AG04449 (cell line): ENCODE measurements at regions of chr9 and their contacts with region 1.

Region 1: GRCh38 chr9:128412120-128412790 is 8.4 kb upstream of the CERCAM start:
- DNase-seq: no peak
- H3K4me3 ChIP-seq: no peak overlapping the region
- CTCF ChIP-seq: peak; percentile 63

Region 2: GRCh38 chr9:128399861-128400260 is 12.4 kb before region 1 on chr9:
- CTCF ChIA-PET with region 1: interaction called, 12 read pairs
- POLR2A ChIA-PET with region 1: no interaction called
- DNase-seq: no peak
- H3K4me3 ChIP-seq: no peak overlapping the region
- CTCF ChIP-seq: no peak

Region 3: GRCh38 chr9:128568470-128569078 is 156.3 kb after region 1 on chr9:
- CTCF ChIA-PET with region 1: no interaction called
- POLR2A ChIA-PET with region 1: no interaction called
- DNase-seq: no peak
- H3K4me3 ChIP-seq: no peak overlapping the region
- CTCF ChIP-seq: no peak